HEK293 (cell line): ENCODE measurements at regions of chr20 and their contacts with region 1.

Region 1: GRCh38 chr20:35454881-35455609 is at the start of gene CEP250:
- H3K4me3 ChIP-seq: peak within 1 kb of the TSS; percentile 72
- H3K27ac ChIP-seq: peak within 1 kb of the TSS; percentile 92
- H3K4me1 ChIP-seq: no peaks in the 10 kb centered on the region
- CTCF ChIP-seq: no peak

Region 2: DNA sequence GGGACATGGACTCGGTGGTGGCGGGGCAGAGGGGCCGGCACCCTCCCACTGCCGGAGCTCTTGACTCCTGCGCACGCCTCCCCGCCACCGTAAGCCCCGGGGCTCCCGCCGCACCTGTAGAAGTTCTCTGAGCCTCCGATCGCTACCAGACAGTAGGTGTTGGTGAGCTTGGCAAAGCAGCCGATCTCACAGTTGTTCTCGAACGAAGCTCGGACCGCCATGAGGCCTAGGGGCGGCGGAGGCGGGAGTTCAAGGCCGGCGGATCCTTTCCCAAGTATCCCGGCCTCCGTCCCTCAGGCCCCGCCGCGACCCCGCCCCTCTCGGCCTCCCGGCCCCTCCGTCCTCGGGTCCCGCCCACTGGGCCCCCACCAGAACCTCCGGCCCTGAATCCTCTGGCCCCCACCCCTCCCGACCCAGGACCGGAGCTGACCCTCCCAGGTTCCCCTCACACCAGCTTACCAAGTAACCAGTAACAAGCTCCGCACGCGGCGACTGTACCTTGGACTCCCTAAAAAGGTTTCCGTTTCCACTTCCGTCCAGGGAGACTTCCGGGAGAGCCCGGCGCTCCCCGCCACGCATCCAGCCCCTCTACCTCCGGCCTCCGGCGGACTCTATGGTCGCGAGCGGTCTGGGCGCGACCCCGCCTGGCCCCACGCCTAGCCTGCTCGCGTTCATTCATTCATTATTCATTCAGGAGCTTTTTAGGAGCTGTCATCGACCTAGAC is 170.6 kb before region 1 on chr20 and contains the start of gene EIF6:
- CTCF ChIA-PET with region 1: no interaction called
- POLR2A ChIA-PET with region 1: interaction called, 19 read pairs
- H3K4me3 ChIP-seq: peak within 1 kb of the TSS; percentile 86
- H3K27ac ChIP-seq: peak within 1 kb of the TSS; percentile 81
- H3K4me1 ChIP-seq: no peaks in the 10 kb centered on the region
- CTCF ChIP-seq: no peak

Region 3: GRCh38 chr20:35318502-35319157 is 136.4 kb before region 1 on chr20:
- CTCF ChIA-PET with region 1: no interaction called
- POLR2A ChIA-PET with region 1: interaction called, 10 read pairs
- H3K4me3 ChIP-seq: peak overlapping the region; percentile 15
- H3K27ac ChIP-seq: peak overlapping the region; percentile 65
- H3K4me1 ChIP-seq: peaks cover 34% of the 10 kb centered on the region
- CTCF ChIP-seq: no peak

Region 4: GRCh38 chr20:35432430-35432735 is 22.7 kb before region 1 on chr20:
- CTCF ChIA-PET with region 1: interaction called, 3 read pairs
- POLR2A ChIA-PET with region 1: interaction called, 10 read pairs
- H3K4me3 ChIP-seq: no peak overlapping the region
- H3K27ac ChIP-seq: no peak overlapping the region
- H3K4me1 ChIP-seq: no peaks in the 10 kb centered on the region
- CTCF ChIP-seq: no peak

Region 5: DNA sequence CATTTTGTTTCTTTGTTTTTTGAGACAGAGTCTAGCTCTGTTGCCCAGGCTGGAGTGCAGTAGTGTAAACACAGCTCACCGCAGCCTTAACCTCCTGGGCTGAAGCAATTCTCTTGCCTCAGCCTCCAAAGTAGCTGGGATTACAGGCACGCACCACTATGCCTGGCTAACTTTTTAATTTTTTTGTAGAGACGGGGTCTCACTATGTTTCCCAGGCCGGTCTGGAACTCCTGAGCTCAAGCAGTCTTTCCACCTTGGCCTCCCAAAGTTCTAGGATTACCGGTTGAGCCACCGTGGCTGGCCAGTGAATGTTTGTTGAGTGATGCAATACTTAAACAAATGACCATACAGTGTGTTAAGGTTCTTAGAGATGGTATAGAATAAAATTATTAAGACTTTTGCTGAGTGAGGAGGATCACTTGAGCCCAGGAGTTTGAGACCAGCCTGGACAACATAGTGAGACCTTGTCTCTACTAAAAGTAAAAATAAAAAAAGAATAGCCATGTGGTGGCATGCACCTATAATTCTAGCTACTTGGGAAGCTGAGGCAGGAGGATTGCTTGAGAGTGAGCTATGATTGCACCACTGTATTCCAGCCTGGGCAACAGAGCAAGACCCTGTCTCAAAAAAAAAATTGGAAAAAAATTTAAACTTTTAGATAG is 13.8 kb after region 1 on chr20:
- CTCF ChIA-PET with region 1: interaction called, 14 read pairs
- POLR2A ChIA-PET with region 1: interaction called, 15 read pairs
- H3K4me3 ChIP-seq: no peak overlapping the region
- H3K27ac ChIP-seq: no peak overlapping the region
- H3K4me1 ChIP-seq: peaks cover 5% of the 10 kb centered on the region; the same call in 1 of the 2 replicates
- CTCF ChIP-seq: no peak

Region 6: GRCh38 chr20:35523298-35523888 is 68.3 kb after region 1 on chr20:
- CTCF ChIA-PET with region 1: no interaction called
- POLR2A ChIA-PET with region 1: no interaction called
- H3K4me3 ChIP-seq: no peak overlapping the region
- H3K27ac ChIP-seq: no peak overlapping the region
- H3K4me1 ChIP-seq: no peaks in the 10 kb centered on the region
- CTCF ChIP-seq: no peak